Esophagus squamous epithelium (tissue), 5 donors: ENCODE measurements at regions of chr6 and their contacts with region 1.

Region 1: DNA sequence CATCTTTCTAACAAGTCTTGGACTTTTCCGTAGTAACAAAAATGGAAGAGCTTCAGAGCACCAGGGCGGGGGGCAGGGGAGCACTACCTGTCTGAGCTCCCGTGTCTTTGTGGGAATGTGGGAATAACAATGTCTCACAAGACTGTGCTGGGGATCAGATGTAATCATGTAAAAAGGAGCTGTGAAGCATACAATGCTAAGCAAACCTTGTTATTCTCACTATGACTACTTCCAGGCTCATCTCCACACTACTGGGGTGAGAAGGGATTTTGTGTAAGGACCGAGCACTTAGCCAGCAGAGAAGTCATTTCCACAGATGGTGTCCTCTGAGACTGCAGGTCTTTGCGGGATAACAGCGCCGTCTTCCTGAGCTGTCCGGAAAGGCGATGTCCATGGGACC is 27.1 kb downstream of the PRR18 start:
- DNase-seq: no peak
- H3K4me3 ChIP-seq: no peak overlapping the region
- H3K27ac ChIP-seq: no peak overlapping the region
- H3K4me1 ChIP-seq: no peaks in the 10 kb centered on the region
- H3K27me3 ChIP-seq: peaks cover 0 to 50% (median 0%) of the 10 kb centered on the region in 4 donors
- CTCF ChIP-seq: no peak
- POLR2A ChIP-seq: no peak

Region 2: GRCh38 chr6:166395356-166395755 is 114.3 kb after region 1 on chr6:
- intact Hi-C with region 1: loop called (anchors 5 kb)
- DNase-seq: no peak
- H3K4me3 ChIP-seq: no peak overlapping the region
- H3K27ac ChIP-seq: no peak overlapping the region
- H3K4me1 ChIP-seq: no peaks in the 10 kb centered on the region
- H3K27me3 ChIP-seq: peaks cover 0 to 47% (median 0%) of the 10 kb centered on the region in 4 donors
- CTCF ChIP-seq: no peak
- POLR2A ChIP-seq: no peak